Activated naive CD4-positive, alpha-beta T cell treated with anti-CD3 and anti-CD28 coated beads for 36 hours (primary cell): ENCODE measurements at regions of chr15 and their contacts with region 1.

Region 1: DNA sequence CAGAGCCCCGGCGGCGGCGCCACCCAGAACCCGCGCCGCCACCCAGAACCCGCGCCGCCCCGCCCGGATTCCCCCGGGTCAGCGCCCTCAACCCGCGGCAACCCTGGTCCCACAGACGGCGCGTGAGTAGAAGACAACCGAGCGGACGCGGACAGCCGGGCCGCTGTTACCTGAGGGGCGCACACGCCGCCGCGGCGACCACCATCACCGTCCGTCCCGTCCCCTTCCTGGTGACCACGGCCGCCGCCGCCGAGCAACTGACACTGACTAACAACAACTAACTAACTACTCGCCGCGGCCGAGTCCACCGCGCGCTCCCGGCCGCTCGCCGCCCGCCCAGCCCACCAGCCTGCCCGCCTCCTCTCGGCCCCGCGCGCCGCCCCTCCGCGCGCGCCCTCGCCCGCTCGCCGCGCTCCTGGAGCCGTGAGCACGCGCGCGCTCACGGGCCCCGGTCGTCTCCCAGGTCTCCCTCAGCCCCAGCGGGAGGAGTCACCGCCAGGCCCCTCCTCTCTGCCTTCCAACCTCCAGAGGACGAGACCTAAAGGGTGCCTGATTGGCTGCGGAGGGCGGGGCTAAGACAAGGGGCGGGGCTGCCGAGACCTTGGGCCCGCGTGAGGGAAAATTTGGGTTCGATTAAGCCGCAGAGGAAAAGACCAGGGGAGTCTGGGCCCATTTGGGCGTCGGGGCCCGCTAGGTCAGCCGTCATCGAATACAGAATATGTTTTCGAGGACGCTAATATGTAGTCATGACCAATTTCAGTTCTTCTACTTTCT is at the start of gene PEAK1:
- DNase-seq: peak; percentile 100
- H3K4me3 Mint-ChIP-seq: peak within 1 kb of the TSS; percentile 95
- H3K27ac Mint-ChIP-seq: peak within 1 kb of the TSS; percentile 98
- H3K4me1 Mint-ChIP-seq: peaks cover 36% of the 10 kb centered on the region
- H3K27me3 Mint-ChIP-seq: no peaks in the 10 kb centered on the region
- total RNA-seq, gene PEAK1: 26.6 to 28.0 TPM

Region 2: DNA sequence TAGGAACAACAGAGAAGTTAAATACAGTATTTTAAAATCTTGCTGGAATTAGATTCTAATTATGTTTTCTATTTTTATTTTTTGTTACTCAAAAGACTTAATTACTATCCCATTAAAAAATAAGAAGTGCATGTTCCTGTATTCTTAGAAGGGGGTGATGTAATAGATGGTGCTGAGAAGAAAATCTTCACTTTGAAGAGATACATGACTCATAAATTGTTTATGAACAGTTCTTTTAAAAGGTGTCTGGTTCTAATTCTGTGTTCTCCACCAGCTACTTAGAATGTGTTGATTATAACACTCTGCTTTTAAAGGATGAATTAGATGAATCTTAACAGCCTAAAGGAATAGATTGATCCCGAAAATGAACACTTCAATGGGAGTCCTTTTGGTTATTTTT is 480.3 kb before region 1 on chr15:
- CTCF ChIA-PET with region 1: no interaction called
- intact Hi-C with region 1: loop called (anchors 2 kb)
- DNase-seq: no peak
- H3K4me3 Mint-ChIP-seq: no peak overlapping the region
- H3K27ac Mint-ChIP-seq: peak overlapping the region; percentile 59
- H3K4me1 Mint-ChIP-seq: peaks cover 13% of the 10 kb centered on the region
- H3K27me3 Mint-ChIP-seq: no peaks in the 10 kb centered on the region

Region 3: DNA sequence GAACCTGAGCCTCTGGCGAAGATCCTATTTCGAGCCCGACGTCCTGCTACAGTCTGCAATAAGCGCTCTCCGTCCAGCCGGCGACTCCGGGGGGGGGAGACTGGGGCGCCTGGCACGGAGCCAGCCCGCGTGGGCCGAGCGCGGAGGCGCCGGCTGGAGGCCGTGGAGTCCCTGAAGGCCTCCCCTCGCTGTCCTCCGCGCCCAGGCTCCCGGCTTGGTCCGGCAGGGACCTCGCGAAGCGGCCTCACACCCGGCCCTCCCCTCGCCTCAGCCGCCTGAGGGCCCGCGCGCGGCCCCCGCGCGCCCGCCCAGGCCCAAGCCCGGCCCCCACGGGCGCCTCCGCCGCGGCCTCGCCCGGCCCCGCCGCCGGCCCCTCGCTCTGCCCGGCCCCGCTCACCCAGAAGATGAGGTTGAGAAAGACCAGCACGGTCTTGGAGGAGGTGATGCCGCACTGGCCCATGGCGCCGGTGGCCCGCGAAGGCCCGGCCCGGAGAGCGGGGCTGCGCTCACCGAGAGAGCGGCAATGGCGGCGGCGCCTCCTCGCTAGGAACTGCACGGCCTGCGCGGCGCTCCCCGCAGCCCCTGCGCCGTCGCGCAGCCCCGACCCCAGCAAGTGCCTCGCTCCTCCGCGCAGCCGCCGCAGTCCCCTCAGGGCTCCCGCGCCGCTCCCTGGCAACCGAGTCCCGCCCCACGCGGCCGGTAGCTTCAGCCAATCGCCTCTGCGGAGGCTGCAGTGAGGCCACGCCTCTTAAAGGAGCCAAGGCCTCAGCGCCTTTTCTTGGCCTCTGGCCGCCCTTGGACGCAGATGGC is 349.3 kb before region 1 on chr15 and contains the start of gene TSPAN3:
- CTCF ChIA-PET with region 1: no interaction called
- intact Hi-C with region 1: loop called (anchors 5 kb)
- DNase-seq: peak; percentile 93
- H3K4me3 Mint-ChIP-seq: peak within 1 kb of the TSS; percentile 77
- H3K27ac Mint-ChIP-seq: peak within 1 kb of the TSS; percentile 71
- H3K4me1 Mint-ChIP-seq: peaks cover 35% of the 10 kb centered on the region
- H3K27me3 Mint-ChIP-seq: no peaks in the 10 kb centered on the region
- total RNA-seq, gene TSPAN3: 21.9 to 24.9 TPM

Region 4: DNA sequence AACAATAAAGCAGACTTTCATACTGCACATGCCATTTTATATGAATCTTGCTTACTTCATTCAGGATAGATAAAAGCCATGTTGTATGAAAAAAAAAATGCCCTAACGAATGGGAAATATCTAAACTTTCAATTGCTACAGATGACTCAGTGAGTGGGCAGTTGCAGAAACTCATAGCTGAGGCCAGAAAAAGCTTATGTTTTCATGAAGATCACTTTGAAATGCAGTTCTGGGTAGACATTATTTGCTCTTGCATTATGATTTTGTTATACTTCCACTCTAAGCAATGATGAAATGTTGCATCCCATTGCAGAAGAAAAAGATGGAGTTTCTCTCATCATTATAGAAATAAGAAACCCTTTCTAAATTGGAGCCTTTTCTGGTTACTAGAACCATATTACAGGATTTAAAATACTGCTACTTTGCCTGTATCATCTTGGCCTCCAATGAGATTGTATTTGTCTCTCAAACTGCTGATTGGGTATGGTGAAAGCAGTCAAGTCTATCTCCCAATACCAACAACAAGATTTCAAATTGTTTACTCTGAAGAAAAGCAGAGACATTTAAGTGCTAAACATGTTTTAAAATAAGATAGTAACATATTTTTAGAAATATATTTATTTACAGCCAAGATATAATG is 17.2 kb before region 1 on chr15:
- CTCF ChIA-PET with region 1: interaction called, 3 read pairs
- intact Hi-C with region 1: loop called (anchors 2 kb)
- DNase-seq: peak; percentile 17
- H3K4me3 Mint-ChIP-seq: peak overlapping the region; percentile 17
- H3K27ac Mint-ChIP-seq: peak overlapping the region; percentile 61
- H3K4me1 Mint-ChIP-seq: peaks cover 43% of the 10 kb centered on the region
- H3K27me3 Mint-ChIP-seq: no peaks in the 10 kb centered on the region

Region 5: GRCh38 chr15:77496710-77497103 is 76.7 kb after region 1 on chr15:
- CTCF ChIA-PET with region 1: interaction called, 6 read pairs
- intact Hi-C with region 1: loop called (anchors 2 kb)
- DNase-seq: peak; percentile 83
- H3K4me3 Mint-ChIP-seq: no peak overlapping the region
- H3K27ac Mint-ChIP-seq: no peak overlapping the region
- H3K4me1 Mint-ChIP-seq: peaks cover 18% of the 10 kb centered on the region
- H3K27me3 Mint-ChIP-seq: no peaks in the 10 kb centered on the region